ENCODE measurements at regions of chr5 and their contacts with region 1.

Region 1: GRCh38 chr5:157476702-157477408 is 16.8 kb downstream of the NIPAL4 start:
- DNase-seq: peak in 1 of 6 donors; percentile 33
- ATAC-seq: peak; percentile 78 to 93 (median 85)
- H3K4me3 ChIP-seq: no peak overlapping the region
- H3K27ac ChIP-seq: no peak overlapping the region
- H3K4me1 ChIP-seq: no peaks in the 10 kb centered on the region
- H3K27me3 ChIP-seq: no peaks in the 10 kb centered on the region
- CTCF ChIP-seq: peak; percentile 62 to 83 (median 64)

Region 2: DNA sequence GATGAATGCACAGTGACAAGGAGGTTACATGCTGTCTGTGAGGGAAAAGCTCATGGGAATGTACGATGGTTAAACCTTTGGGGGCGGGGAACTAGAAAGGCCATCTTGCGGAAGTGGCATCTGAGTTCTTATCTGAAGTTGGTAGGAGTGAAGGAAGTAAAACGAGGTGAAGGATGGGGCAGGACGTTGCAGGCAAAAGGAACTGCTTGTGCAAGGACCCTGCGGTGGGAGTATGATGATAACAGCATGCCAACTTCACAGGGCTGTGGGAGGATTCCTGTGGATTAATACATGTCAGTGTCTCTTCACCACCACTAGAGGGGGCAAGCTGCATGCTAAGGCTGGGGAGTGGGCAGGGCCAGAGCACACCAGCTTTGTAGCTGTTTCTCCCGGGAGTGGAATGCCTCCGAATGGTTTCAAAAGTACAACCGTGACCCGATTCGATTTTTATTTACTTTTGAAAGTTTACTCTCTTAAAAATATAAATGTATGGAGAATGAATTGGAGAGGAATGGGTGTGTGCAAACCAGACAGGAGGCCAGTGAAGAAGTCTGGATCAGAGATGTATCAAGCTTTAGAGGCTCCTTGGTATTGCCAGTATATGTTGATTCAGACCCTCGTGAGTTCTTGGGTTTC is 148.5 kb before region 1 on chr5:
- intact Hi-C with region 1: loop called in 1 of 3 experiments (anchors 5 kb)
- DNase-seq: peak in 4 of 6 donors; percentile 37 to 59 (median 55)
- ATAC-seq: peak; percentile 93 to 100 (median 100)
- H3K4me3 ChIP-seq: peak overlapping the region in 1 of 4 donors; percentile 27
- H3K27ac ChIP-seq: no peak overlapping the region
- H3K4me1 ChIP-seq: no peaks in the 10 kb centered on the region
- H3K27me3 ChIP-seq: no peaks in the 10 kb centered on the region
- CTCF ChIP-seq: peak; percentile 54 to 91 (median 88)